BJ (cell line): ENCODE measurements at regions of chr15 and their contacts with region 1.

Region 1: GRCh38 chr15:33700695-33701304 is 267.5 kb upstream of the CHRM5 start:
- DNase-seq: no peak
- H3K4me3 ChIP-seq: no peak overlapping the region
- H3K27me3 ChIP-seq: peaks cover 8% of the 10 kb centered on the region
- CTCF ChIP-seq: peak; percentile 96

Region 2: DNA sequence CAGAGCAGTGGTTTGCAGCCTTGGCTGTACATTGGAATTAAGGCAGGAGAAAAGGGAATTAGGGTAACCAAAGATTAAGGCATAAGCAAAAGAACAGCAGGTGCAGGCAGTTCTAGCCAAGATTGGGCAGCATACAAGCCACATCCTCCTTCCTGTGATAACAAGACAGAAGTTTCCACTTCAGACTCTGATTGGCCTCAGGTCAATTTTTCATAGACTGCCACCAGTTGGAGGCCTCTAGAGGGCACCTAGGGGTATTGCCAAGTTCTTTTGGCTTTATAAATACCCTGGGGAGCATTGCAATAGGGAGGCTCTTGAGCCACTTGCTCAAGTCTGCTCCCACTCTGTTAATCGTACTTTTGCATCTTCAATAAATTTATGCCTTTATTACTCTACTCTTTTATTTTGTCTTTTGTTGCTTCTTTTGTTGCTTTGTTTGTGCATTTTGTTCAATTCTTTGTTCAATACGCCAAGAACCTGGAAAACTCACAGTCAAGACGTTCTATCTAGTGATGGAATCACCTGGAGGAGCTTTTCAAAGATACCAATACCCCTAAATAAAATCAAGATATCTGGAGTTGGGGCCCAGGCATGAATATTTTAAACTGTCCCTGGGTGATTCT is 474.1 kb before region 1 on chr15:
- CTCF ChIA-PET with region 1: interaction called, 13 read pairs
- POLR2A ChIA-PET with region 1: no interaction called
- DNase-seq: no peak
- H3K4me3 ChIP-seq: no peak overlapping the region
- H3K27me3 ChIP-seq: peaks cover 1% of the 10 kb centered on the region
- CTCF ChIP-seq: peak; percentile 25; the same call in 1 of the 2 replicates

Region 3: DNA sequence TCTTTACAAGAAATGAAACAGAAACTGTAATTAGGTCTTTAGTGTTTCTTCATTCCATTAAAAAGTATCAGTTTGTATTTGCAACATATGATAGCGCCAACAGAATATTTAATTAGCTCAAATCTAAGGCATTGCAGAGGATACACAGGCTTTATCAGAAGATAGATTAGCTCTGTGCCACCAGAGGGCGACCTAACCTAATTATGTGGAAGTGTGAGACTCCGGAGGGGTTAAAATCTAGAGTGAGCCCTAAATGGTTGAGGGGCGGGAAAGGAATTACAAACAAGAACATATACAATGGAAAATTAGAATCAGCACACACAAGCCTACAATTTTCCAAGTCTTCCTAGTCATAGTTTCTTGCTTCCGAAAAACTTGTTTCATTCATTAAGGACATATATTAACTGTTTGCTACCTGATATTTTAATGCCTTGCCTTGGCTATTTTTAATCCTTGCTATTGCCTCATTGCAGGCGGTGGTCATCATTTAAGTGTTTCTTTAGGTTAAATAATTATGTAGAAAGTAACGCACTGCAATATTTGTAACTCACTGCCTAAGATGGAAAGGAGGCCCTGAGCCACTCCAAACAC is 408.0 kb before region 1 on chr15:
- CTCF ChIA-PET with region 1: interaction called, 45 read pairs
- POLR2A ChIA-PET with region 1: no interaction called
- DNase-seq: no peak
- H3K4me3 ChIP-seq: no peak overlapping the region
- H3K27me3 ChIP-seq: peaks cover 8% of the 10 kb centered on the region; the same call in 1 of the 2 replicates
- CTCF ChIP-seq: peak; percentile 69

Region 4: GRCh38 chr15:33587773-33588172 is 113.0 kb before region 1 on chr15:
- CTCF ChIA-PET with region 1: no interaction called
- POLR2A ChIA-PET with region 1: no interaction called
- DNase-seq: no peak
- H3K4me3 ChIP-seq: no peak overlapping the region
- H3K27me3 ChIP-seq: no peaks in the 10 kb centered on the region
- CTCF ChIP-seq: no peak

Region 5: DNA sequence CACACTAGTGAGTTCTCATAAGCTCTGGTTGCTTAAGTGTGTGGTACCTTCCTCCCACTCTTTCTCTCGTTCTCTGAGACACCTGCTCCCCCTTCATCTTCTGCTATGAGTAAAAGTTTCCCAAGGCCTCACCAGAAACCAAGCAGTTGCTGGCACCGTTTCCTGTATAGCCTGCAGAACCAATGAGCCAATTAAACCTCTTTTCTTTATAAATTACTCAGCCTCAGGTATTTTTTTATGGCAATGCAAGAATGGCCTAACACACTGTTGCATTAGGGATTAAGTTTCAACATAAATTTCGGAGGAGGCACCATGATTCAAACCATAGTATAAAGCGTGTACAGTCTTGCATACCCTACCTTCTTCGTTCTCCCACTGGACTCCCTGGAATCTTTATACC is 15.2 kb after region 1 on chr15:
- CTCF ChIA-PET with region 1: interaction called, 38 read pairs
- POLR2A ChIA-PET with region 1: no interaction called
- DNase-seq: no peak
- H3K4me3 ChIP-seq: no peak overlapping the region
- H3K27me3 ChIP-seq: no peaks in the 10 kb centered on the region
- CTCF ChIP-seq: no peak

Region 6: GRCh38 chr15:33737687-33738601 is 37.1 kb after region 1 on chr15:
- CTCF ChIA-PET with region 1: interaction called, 10 read pairs
- POLR2A ChIA-PET with region 1: no interaction called
- DNase-seq: no peak
- H3K4me3 ChIP-seq: no peak overlapping the region
- H3K27me3 ChIP-seq: peaks cover 8% of the 10 kb centered on the region
- CTCF ChIP-seq: peak; percentile 86